ENCODE measurements at regions of chr14 and their contacts with region 1.

Region 1: GRCh38 chr14:75126679-75127473 is at the start of gene NEK9:
- ATAC-seq: peak; percentile 92 to 97 (median 95)
- H3K4me3 ChIP-seq: peak within 1 kb of the TSS; percentile 49 to 89 (median 69)
- H3K27ac ChIP-seq: peak within 1 kb of the TSS; percentile 79 to 91
- H3K4me1 ChIP-seq: peaks cover 5 to 11% of the 10 kb centered on the region in 2 donors
- total RNA-seq, gene NEK9: 16.0 to 83.2 (median 23.6) TPM

Region 2: DNA sequence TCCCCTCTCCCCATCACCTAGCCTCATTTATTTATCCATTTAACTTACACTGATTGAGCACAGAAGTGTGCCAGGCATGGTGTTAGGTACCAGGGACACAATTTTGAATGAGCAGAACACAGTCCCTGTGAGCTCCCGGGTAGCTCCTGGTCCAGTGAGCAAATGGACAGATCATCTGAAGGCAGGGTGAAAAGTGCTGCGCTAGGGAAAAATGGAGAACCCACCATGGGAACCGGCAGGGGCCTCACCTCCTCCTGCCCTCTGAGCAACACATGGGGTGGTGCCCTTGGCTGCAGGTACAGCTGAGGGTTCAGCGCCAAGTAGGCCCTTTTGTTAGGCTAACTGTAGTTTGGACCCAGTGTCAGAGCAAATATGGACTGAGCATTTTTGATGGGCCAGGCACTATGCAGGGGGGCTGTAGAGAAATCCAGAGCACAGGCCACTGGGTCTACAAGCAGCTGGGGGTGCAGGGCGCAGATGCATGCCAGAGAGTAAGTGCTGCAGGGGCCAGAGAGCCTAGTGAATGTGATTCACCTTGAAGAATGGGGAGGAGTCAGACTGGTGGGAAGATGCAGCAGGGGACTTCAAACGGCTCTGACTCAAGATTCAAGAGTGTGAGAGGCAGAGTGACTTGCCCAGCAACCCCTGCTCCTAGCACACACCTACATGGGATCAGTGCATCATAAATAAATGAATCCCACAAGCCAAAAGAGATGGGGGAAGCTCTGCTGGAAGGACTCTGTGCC is 543.0 kb before region 1 on chr14:
- in situ Hi-C with region 1: no loop called
- ATAC-seq: peak in 2 of 8 experiments; percentile 40 to 41
- H3K4me3 ChIP-seq: no peak overlapping the region
- H3K27ac ChIP-seq: no peak overlapping the region
- H3K4me1 ChIP-seq: peaks cover 0 to 11% of the 10 kb centered on the region in 2 donors

Region 3: DNA sequence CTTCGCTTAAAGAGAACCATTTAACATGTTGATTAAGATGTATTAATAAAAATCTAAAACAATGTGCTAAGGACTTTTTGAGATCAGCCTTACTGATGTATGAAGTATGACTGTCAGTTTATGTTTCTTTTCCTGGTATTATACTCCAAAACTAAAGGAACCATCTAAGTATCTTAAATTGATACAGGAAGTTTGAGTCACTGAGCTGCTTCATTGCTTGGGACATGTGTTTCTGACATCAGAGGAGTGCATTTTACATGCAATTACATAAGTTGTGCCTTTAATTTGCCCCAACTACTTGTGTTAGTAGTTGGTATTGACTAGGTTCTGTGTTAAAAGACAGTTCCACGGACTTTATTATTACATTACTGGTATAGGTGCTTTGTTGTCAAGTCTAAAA is 301.9 kb before region 1 on chr14:
- in situ Hi-C with region 1: no loop called
- ATAC-seq: peak in 2 of 8 experiments; percentile 64 to 88
- H3K4me3 ChIP-seq: no peak overlapping the region
- H3K27ac ChIP-seq: no peak overlapping the region
- H3K4me1 ChIP-seq: no peaks in the 10 kb centered on the region

Region 4: GRCh38 chr14:74881431-74882361 is 245.2 kb before region 1 on chr14 and contains the start of gene DLST:
- in situ Hi-C with region 1: loop called in 1 of 9 experiments (anchors 25 kb)
- ATAC-seq: peak; percentile 87 to 99 (median 98)
- H3K4me3 ChIP-seq: peak within 1 kb of the TSS; percentile 89 to 100 (median 91)
- H3K27ac ChIP-seq: peak within 1 kb of the TSS; percentile 78 to 89
- H3K4me1 ChIP-seq: peaks cover 16 to 19% of the 10 kb centered on the region in 2 donors
- total RNA-seq, gene DLST: 30.3 to 106 (median 51.6) TPM

Region 5: GRCh38 chr14:75293920-75294642 is 167.2 kb after region 1 on chr14:
- in situ Hi-C with region 1: loop called in 5 of 9 experiments (anchors 5 to 25 kb)
- ATAC-seq: peak; percentile 78 to 92 (median 89)
- H3K4me3 ChIP-seq: peak overlapping the region; percentile 40 to 57 (median 49)
- H3K27ac ChIP-seq: peak overlapping the region; percentile 72 to 88
- H3K4me1 ChIP-seq: peaks cover 9 to 10% of the 10 kb centered on the region in 2 donors

Region 6: DNA sequence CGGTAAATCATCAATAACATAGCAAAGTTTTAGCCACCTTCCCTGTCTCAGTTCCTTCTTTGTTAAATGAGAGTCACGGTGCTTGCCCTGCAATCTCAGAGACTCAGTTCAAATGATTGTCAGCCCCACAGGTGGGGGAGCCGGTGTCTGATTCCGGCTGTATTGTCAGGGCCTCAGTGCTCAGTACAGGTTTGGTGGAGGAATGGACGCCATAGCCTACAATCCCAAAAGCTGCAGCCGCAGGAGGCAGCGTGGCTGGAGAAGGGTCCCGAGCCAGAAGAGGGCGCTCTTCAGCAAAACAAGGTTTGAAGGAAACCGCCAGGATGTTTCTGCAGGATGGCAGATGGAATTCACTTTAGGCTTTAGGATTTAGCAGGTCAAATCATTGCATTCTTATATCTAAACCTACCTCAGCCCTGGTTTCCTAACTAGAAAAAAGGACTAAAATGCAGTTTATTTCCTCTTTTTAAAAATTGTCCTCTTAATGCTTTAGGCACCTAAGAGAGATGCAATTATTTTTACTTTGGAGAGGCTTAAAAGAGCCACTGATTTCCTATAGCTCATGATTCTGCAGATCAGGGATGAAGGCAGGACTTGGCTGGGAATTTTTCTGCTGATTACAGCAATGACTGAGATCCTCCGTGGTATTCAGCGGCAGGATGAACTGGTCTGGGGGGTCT is 181.0 kb after region 1 on chr14:
- in situ Hi-C with region 1: loop called in 4 of 9 experiments (anchors 5 to 10 kb)
- ATAC-seq: peak; percentile 22 to 69 (median 63)
- H3K4me3 ChIP-seq: no peak overlapping the region
- H3K27ac ChIP-seq: no peak overlapping the region
- H3K4me1 ChIP-seq: peaks cover 0 to 11% of the 10 kb centered on the region in 2 donors

Region 7: DNA sequence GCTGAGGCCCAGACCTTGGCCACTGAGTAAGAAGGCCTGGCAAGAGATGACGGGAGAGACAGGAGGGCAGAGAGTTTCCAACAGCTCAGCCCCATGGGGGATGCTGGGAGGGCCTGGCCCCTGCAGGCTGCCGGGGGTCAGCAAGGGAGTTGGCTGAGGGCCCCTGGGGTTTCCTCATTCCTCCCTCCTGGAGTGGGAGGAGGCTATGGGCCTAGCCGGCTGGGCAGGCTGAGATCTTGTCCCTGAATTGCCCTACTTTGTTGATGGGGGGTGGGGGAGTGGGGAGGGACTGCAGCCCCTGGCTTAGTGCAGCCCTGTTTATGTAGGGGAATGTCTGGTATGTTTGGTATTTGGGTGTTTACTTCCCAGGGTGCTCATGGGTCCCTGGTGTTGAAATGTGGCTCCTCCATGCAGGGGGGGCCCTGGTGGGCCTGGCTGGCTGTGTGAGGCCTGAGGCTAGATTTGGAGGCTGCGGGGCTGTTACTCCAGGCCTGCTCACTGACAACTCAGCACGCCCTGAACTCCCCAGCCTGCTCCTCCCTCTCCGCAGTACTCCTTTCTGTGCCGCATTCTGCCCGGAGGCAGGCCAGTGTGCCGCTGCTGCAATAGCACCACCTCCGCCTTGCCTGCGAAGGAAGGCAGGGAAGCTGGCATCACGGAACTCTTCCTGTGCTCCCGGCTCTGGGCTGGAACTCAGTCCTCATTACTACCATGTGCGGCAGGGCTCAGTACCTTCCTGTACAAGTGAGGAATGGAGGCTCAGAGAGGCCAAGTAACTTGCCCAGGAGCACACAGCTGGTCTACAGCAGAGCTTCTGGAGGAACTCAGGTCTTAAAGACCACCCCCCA is 326.2 kb after region 1 on chr14:
- in situ Hi-C with region 1: loop called in 1 of 9 experiments (anchors 25 kb)
- ATAC-seq: peak; percentile 55 to 85 (median 80)
- H3K4me3 ChIP-seq: no peak overlapping the region
- H3K27ac ChIP-seq: peak overlapping the region; percentile 59 to 76
- H3K4me1 ChIP-seq: peaks cover 51 to 73% of the 10 kb centered on the region in 2 donors

Region 8: GRCh38 chr14:75487155-75487671 is 360.3 kb after region 1 on chr14:
- in situ Hi-C with region 1: loop called in 6 of 9 experiments (anchors 25 kb)
- ATAC-seq: no peak
- H3K4me3 ChIP-seq: no peak overlapping the region
- H3K27ac ChIP-seq: no peak overlapping the region
- H3K4me1 ChIP-seq: no peaks in the 10 kb centered on the region

Measured in motor neuron (in vitro differentiated cells).